ENCODE measurements at regions of chr17 and their contacts with region 1.

Region 1: GRCh38 chr17:34980681-34981537 is 597 bp downstream of the LIG3 start:
- DNase-seq: peak; percentile 51

Region 2: GRCh38 chr17:34961093-34961911 is 19.6 kb before region 1 on chr17 and contains the starts of genes CCT6B and ZNF830:
- CTCF ChIA-PET with region 1: interaction called, 3 read pairs
- POLR2A ChIA-PET with region 1: interaction called, 16 read pairs
- DNase-seq: peak; percentile 88

Region 3: GRCh38 chr17:34990921-34991365 is 10.0 kb after region 1 on chr17:
- CTCF ChIA-PET with region 1: no interaction called
- POLR2A ChIA-PET with region 1: interaction called, 21 read pairs
- DNase-seq: no peak

Region 4: GRCh38 chr17:35011671-35012210 is 30.8 kb after region 1 on chr17:
- CTCF ChIA-PET with region 1: no interaction called
- POLR2A ChIA-PET with region 1: no interaction called
- DNase-seq: no peak